PC-9 (cell line): ENCODE measurements at regions of chr10 and their contacts with region 1.

Region 1: DNA sequence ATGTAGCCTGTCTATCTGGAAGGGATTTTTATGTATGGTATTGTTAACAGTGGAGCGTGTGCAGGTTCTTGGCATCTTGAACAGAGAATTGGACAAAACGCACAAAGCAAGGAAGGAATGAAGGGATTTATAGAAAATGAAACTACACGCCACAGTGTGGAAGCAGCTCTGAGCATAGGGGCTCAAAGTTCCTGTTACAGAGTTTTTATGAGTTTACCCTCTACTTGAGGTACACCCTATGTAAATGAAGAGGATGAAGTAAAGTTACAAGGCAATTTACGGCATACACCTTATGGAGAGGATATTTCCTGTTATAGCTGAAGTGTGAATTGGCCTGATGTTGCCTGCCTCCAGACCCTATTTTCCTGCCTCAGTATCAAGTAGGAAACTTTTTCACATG is 33.3 kb downstream of the FANK1 start:
- DNase-seq: no peak
- H3K4me3 ChIP-seq: no peak overlapping the region
- H3K27ac ChIP-seq: no peak overlapping the region
- H3K4me1 ChIP-seq: peaks cover 7% of the 10 kb centered on the region; the same call in 1 of the 2 replicates
- H3K27me3 ChIP-seq: no peaks in the 10 kb centered on the region
- CTCF ChIP-seq: no peak

Region 2: DNA sequence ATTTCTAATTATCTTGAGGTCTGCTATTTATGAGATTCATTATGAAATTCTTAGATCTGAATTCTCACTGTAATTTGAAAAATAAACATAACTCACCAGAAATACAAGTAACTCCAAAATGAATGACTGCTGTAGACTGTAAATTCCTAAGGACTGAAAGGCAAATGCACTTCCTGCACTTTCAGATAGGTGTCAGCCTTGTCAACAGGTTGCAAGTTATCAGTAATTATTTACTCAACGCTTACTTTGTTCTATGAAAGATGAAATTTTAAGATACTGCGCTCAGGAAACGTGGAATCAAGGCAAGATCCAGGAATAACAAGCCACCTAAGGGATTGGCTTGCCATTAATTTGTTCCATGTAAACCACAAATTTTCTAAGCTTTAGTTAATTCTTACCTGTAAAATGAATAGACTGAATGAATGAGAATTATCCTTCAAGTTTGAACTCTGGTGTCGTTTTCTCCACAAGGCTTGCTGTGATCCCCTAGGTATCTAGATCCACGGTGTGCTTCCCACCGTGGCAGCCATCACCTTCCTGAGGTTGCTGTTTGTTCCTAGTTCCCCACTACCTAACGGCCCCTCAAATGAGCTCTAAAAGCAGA is 61.1 kb before region 1 on chr10:
- CTCF ChIA-PET with region 1: interaction called, 3 read pairs
- POLR2A ChIA-PET with region 1: no interaction called
- intact Hi-C with region 1: loop called (anchors 5 kb)
- DNase-seq: peak in 1 of 2 experiments; percentile 9
- H3K4me3 ChIP-seq: no peak overlapping the region
- H3K27ac ChIP-seq: no peak overlapping the region
- H3K4me1 ChIP-seq: no peaks in the 10 kb centered on the region
- H3K27me3 ChIP-seq: no peaks in the 10 kb centered on the region
- CTCF ChIP-seq: peak; percentile 87

Region 3: GRCh38 chr10:125976960-125977603 is 47.5 kb after region 1 on chr10:
- CTCF ChIA-PET with region 1: no interaction called
- POLR2A ChIA-PET with region 1: no interaction called
- intact Hi-C with region 1: loop called (anchors 5 kb)
- DNase-seq: no peak
- H3K4me3 ChIP-seq: no peak overlapping the region
- H3K27ac ChIP-seq: no peak overlapping the region
- H3K4me1 ChIP-seq: peaks cover 7% of the 10 kb centered on the region; the same call in 1 of the 2 replicates
- H3K27me3 ChIP-seq: no peaks in the 10 kb centered on the region
- CTCF ChIP-seq: no peak

Region 4: DNA sequence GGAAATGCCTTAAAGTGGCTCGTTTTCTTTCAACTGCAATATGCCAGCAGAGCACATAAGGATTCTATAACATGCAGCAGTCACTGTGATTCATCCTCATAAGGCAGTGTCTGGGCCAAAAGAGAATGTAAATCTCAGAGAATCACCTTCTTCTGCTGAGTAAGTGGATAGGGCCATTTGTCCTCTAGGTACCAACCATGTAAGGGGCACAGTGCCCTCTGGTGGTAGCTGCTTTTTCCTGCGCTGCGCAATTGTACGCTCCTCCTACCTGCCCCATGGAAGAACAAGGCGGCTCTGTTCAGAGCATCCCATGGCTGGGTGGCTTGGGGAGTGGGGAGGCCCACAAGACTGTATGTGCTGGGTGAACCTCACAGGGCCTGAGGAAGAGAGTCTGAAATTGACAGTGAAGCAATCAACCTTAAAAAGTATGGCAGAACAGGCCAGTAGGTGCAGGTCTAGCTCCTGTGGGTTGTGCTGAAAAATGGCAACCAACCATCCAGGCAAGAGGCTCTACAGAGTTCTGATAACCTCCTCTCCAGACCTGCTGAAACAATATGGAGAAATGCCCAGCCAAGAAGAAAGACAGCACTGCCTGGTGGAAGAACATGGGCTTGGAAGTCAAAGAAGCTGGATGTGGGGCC is 819.5 kb after region 1 on chr10:
- CTCF ChIA-PET with region 1: no interaction called
- POLR2A ChIA-PET with region 1: no interaction called
- intact Hi-C with region 1: loop called (anchors 5 kb)
- DNase-seq: peak; percentile 40 to 63
- H3K4me3 ChIP-seq: no peak overlapping the region
- H3K27ac ChIP-seq: no peak overlapping the region
- H3K4me1 ChIP-seq: no peaks in the 10 kb centered on the region
- H3K27me3 ChIP-seq: no peaks in the 10 kb centered on the region
- CTCF ChIP-seq: peak; percentile 58